ENCODE measurements at regions of chr9 and their contacts with region 1.

Region 1: DNA sequence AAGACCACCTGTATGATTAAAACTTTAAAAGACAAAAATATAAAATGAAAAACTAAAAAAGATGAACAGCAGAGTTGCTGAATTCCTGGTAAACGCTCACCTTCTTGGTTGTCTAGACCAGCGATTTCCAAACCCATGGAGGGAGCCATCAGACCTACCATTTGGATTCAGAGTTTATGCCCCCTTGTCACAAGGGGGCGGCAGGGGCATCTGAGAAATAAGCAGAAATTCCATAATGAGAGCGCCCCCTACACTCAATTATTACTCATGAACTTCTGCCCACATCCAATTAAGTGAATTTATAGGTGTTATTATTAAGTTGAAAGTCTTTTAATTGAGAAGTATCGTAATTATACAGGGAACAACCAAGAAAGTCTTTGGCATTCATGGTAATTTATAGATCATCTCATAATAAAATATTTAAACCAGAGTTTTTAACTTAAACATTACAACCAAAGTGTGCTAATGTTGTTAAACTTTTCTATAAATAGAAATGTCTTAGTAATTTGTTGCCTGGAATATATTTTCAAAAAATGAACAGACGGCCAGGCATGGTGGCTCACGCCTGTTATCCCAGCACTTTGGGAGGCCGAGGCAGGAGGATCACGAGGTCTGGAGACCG is 35.2 kb upstream of the SPATA31C2 start:
- DNase-seq: peak; percentile 73
- H3K4me3 Mint-ChIP-seq: no peak overlapping the region
- H3K27ac Mint-ChIP-seq: no peak overlapping the region
- H3K4me1 Mint-ChIP-seq: peaks cover 6% of the 10 kb centered on the region
- H3K27me3 Mint-ChIP-seq: peaks cover 41% of the 10 kb centered on the region

Region 2: GRCh38 chr9:88458716-88459465 is 285.4 kb after region 1 on chr9:
- CTCF ChIA-PET with region 1: no interaction called
- DNase-seq: no peak
- H3K4me3 Mint-ChIP-seq: no peak overlapping the region
- H3K27ac Mint-ChIP-seq: no peak overlapping the region
- H3K4me1 Mint-ChIP-seq: no peaks in the 10 kb centered on the region
- H3K27me3 Mint-ChIP-seq: no peaks in the 10 kb centered on the region

Region 3: DNA sequence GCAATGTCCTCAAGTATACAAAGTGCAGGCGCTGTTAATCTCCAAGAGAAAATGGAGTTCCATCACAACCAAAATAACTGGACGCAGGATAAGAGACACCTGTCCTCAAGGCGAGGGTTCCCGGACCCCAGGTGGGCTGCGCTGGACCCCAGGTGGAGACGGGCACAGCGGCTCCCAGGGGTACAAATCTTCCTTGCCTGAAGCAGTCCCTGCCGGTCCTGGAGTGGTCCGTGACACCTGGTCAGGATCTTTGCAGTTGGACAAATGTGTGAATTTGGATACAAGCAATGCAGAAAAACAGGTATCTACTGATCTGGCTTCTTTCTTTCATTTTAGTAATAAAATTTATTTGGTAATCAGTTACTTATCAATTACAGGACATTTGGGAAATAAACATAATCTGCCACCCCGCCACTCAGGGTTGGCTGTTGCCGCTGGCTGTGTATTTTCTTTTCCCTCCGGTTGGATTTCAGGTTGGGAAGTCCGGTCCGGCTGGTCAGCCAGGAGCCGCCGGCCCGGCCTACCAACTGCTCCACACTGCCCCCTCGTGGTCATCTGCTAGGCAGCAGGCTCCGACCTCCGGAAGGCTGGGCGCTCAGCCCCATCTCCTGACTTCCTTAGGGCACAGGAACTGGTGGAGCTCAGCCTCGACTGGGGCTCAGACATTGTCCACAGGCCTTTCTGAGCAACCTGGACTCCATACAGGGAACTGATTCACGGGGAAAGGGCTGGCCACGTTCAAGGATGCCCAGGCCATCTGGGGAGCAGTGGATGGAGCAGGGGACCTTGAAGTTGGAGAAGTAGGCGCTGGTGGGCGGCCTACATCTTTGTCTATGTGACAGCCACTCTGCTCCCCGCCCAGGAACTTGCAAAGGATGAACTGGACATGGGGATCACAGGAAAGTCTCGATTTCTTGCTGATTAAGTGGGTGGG is 404.9 kb after region 1 on chr9:
- CTCF ChIA-PET with region 1: interaction called, 17 read pairs
- DNase-seq: peak; percentile 74
- H3K4me3 Mint-ChIP-seq: peak overlapping the region; percentile 26
- H3K27ac Mint-ChIP-seq: no peak overlapping the region
- H3K4me1 Mint-ChIP-seq: peaks cover 3% of the 10 kb centered on the region
- H3K27me3 Mint-ChIP-seq: peaks cover 27% of the 10 kb centered on the region

Measured in activated naive CD4-positive, alpha-beta T cell treated with anti-CD3 and anti-CD28 coated beads, Interleukin-2, amount 10 ng/mL, durations not matched to agents 7 days and 5 days (primary cell).